ENCODE measurements at regions of chr3 and their contacts with region 1.

Region 1: DNA sequence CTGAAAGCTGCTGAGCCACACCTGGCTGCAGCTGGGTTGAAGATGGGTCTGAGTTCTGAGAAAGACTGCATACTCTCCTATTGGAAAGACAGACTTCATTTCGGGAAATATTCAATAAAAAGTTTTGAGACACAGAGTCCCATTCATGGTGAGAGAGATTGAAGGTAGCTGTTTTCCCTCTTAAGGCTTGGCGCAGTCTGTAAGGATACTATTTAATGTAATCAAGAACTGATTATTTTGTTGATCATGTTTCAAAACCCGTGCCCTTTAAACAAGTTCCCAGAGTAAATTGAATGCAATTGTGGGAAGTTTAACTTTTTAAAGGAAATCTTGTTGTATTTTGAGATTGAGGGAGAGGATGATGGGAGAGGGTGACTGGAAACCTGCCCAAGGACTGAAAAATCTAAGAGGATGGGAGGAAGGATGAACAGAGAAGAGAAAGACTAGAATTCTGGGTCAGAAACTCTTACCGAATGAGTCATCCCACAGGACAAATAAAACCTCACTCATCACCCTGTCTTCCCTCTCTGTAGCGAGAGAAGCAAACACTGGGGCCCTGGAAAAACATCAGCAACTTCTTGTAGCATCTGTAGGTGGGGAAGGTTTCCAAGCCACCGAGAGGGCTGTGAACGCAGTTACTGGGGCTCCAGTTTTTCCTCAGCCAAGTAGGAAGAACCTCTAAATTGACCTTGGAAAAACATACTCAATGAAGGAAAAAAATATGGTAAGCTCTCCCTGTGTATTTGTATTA is 193.2 kb upstream of the TPRG1 start:
- DNase-seq: peak; percentile 78
- ATAC-seq: peak; percentile 69
- H3K4me3 ChIP-seq: no peak overlapping the region
- H3K27ac ChIP-seq: peak overlapping the region; percentile 75; the same call in 1 of the 2 replicates
- H3K4me1 ChIP-seq: peaks cover 14% of the 10 kb centered on the region
- H3K27me3 ChIP-seq: peaks cover 11% of the 10 kb centered on the region
- CTCF ChIP-seq: no peak
- POLR2A ChIP-seq: no peak
- RAD21 ChIP-seq: no peak

Region 2: GRCh38 chr3:189025866-189026265 is 47.3 kb after region 1 on chr3:
- CTCF ChIA-PET with region 1: no interaction called
- POLR2A ChIA-PET with region 1: no interaction called
- dilution Hi-C with region 1: no loop called
- in situ Hi-C with region 1: no loop called
- intact Hi-C with region 1: no loop called
- DNase-seq: no peak
- ATAC-seq: no peak
- H3K4me3 ChIP-seq: no peak overlapping the region
- H3K27ac ChIP-seq: no peak overlapping the region
- H3K4me1 ChIP-seq: no peaks in the 10 kb centered on the region
- H3K27me3 ChIP-seq: no peaks in the 10 kb centered on the region; the same call in 1 of the 2 replicates
- CTCF ChIP-seq: no peak
- POLR2A ChIP-seq: no peak
- RAD21 ChIP-seq: no peak

Region 3: DNA sequence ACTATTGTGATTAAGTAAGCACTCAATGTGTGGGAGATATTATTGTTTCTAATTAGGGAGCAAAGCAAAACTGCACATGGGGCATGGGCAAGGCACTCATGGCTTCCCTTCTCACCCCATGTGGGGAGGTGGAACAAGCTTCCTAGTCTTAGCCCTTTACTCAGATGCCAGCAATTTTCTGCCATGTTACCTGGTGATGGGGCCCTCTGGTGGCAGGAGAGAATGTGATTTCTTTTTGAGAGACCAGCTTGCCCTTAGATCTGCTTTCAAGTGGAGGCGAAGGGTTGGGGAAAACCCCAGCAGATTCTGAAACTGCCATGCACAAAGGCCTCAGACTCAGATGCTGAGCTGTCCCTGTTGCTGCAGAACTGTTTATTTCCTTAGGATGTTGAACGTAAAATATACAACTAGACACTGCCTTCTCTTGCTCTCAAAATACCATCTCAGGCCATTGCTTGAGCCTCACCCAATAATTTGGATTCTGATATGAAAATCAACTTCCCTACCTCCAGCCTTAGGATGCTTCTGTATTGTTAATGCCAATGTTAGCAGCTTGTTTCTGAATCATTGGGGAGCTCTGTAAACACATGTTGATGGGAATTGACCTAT is 63.0 kb after region 1 on chr3:
- CTCF ChIA-PET with region 1: no interaction called
- POLR2A ChIA-PET with region 1: no interaction called
- dilution Hi-C with region 1: no loop called
- in situ Hi-C with region 1: no loop called
- intact Hi-C with region 1: loop called (anchors 5 kb)
- DNase-seq: peak; percentile 45
- ATAC-seq: peak; percentile 42; the same call in 1 of the 2 replicates
- H3K4me3 ChIP-seq: no peak overlapping the region
- H3K27ac ChIP-seq: no peak overlapping the region
- H3K4me1 ChIP-seq: no peaks in the 10 kb centered on the region
- H3K27me3 ChIP-seq: no peaks in the 10 kb centered on the region; the same call in 1 of the 2 replicates
- CTCF ChIP-seq: peak; percentile 42
- POLR2A ChIP-seq: no peak
- RAD21 ChIP-seq: peak; percentile 34

Region 4: DNA sequence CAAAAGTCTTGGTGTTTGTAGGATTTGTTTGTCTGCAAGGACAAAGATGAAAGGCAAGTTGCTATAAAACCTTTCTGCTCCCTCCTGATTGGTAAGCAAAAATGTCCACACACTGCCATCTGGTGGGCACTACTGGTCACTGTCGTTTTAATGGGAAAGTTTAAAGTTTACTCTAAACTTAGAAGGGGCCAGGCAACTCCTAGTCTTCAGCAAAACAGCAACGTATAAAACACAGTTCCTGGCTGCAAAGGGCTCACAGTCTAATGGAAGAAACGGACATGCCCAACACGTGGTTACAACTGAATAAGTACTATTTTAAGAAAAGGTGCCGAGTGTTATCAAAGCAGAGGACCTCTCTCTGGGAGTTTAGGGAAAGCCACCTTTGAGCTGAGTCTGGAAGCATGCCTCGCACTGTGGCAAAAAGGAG is 169.5 kb after region 1 on chr3:
- CTCF ChIA-PET with region 1: no interaction called
- POLR2A ChIA-PET with region 1: no interaction called
- dilution Hi-C with region 1: no loop called
- in situ Hi-C with region 1: no loop called
- intact Hi-C with region 1: loop called (anchors 5 kb)
- DNase-seq: peak; percentile 67
- ATAC-seq: peak; percentile 91
- H3K4me3 ChIP-seq: no peak overlapping the region
- H3K27ac ChIP-seq: no peak overlapping the region
- H3K4me1 ChIP-seq: 0 out of 2 replicates have a peak, but pooled peaks cover 3% of the 10 kb centered on the region
- H3K27me3 ChIP-seq: peaks cover 9% of the 10 kb centered on the region
- CTCF ChIP-seq: peak; percentile 81
- POLR2A ChIP-seq: no peak
- RAD21 ChIP-seq: peak; percentile 79

Region 5: GRCh38 chr3:189233225-189233858 is 254.7 kb after region 1 on chr3:
- CTCF ChIA-PET with region 1: no interaction called
- POLR2A ChIA-PET with region 1: no interaction called
- dilution Hi-C with region 1: no loop called
- in situ Hi-C with region 1: no loop called
- intact Hi-C with region 1: loop called (anchors 10 kb)
- DNase-seq: peak; percentile 53
- ATAC-seq: peak; percentile 90
- H3K4me3 ChIP-seq: no peak overlapping the region
- H3K27ac ChIP-seq: no peak overlapping the region
- H3K4me1 ChIP-seq: no peaks in the 10 kb centered on the region
- H3K27me3 ChIP-seq: peaks cover 13% of the 10 kb centered on the region
- CTCF ChIP-seq: peak; percentile 55
- POLR2A ChIP-seq: no peak
- RAD21 ChIP-seq: peak; percentile 68

Measured in IMR-90 (cell line).